ENCODE measurements at regions of chrX and their contacts with region 1.

Region 1: DNA sequence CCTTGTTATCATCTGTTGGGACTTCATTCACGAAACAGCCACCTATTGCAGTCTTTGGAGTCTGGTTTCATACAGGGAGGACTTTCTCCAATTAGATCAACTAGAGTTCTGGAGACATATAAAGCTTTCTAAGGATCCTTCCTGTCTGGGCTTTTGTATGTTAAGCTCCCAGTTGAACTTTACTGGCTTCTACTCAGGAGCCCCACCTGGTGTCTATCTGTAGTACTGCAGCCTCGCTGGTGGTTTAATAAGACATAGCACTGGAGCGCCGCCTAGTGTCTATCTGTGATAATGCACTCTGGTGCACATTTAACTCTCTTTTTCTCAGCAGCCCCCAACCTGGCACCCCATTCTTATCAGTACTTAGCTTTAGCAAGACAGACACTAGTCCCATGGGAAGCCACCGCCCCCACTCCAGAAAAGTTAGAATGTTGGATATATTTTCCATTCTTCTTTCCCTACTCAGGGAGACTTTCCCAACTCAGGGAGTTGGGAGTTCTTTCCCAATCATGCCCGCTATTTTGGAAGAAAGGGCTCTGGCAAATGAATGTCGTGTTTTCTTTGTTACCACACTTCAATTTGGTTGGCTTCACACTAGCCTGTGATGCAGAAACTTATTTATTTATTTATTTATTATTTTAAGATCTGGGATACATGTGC is 36.9 kb upstream of the SYTL4 start:
- DNase-seq: peak in 41 of 42 donors; percentile 10 to 84 (median 62)

Region 2: GRCh38 chrX:100643956-100644860 is 124.6 kb before region 1 on chrX and contains the start of gene SRPX2:
- intact Hi-C with region 1: no loop called
- DNase-seq: peak in 14 of 42 donors; percentile 2 to 51 (median 12)

Region 3: GRCh38 chrX:100685284-100685996 is 83.4 kb before region 1 on chrX:
- intact Hi-C with region 1: loop called (anchors 10 kb)
- DNase-seq: peak in 41 of 42 donors; percentile 10 to 89 (median 68)